PC-9 (cell line): ENCODE measurements at regions of chr2 and their contacts with region 1.

Region 1: GRCh38 chr2:234679741-234680687 is 183.1 kb upstream of the ARL4C start:
- DNase-seq: peak; percentile 86 to 96
- H3K4me3 ChIP-seq: no peak overlapping the region
- H3K27ac ChIP-seq: peak overlapping the region; percentile 90
- H3K4me1 ChIP-seq: peaks cover 75% of the 10 kb centered on the region
- H3K27me3 ChIP-seq: no peaks in the 10 kb centered on the region
- CTCF ChIP-seq: no peak

Region 2: DNA sequence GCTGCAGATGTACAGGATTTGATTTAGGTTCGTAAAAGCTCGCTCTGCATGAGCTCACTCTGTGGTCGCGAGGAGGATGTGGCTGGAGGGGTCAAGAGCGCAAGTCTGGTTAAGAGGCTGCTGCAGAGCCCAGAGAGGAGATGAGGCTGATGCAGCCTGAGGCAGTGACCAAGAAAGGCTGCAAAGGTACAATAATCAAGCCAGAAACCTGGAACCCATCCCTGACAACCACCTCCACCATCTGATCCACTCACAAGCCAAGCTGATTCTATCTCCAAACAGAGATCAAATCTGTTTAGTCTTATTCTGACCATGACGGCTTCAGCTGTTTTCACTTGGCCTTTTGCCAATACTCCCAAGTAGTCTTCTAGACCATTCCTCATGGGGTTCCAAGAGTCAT is 124.3 kb before region 1 on chr2:
- CTCF ChIA-PET with region 1: no interaction called
- POLR2A ChIA-PET with region 1: no interaction called
- intact Hi-C with region 1: loop called (anchors 5 kb)
- DNase-seq: no peak
- H3K4me3 ChIP-seq: no peak overlapping the region
- H3K27ac ChIP-seq: no peak overlapping the region
- H3K4me1 ChIP-seq: peaks cover 29% of the 10 kb centered on the region
- H3K27me3 ChIP-seq: no peaks in the 10 kb centered on the region
- CTCF ChIP-seq: no peak